ENCODE measurements at regions of chrX and their contacts with region 1.

Region 1: DNA sequence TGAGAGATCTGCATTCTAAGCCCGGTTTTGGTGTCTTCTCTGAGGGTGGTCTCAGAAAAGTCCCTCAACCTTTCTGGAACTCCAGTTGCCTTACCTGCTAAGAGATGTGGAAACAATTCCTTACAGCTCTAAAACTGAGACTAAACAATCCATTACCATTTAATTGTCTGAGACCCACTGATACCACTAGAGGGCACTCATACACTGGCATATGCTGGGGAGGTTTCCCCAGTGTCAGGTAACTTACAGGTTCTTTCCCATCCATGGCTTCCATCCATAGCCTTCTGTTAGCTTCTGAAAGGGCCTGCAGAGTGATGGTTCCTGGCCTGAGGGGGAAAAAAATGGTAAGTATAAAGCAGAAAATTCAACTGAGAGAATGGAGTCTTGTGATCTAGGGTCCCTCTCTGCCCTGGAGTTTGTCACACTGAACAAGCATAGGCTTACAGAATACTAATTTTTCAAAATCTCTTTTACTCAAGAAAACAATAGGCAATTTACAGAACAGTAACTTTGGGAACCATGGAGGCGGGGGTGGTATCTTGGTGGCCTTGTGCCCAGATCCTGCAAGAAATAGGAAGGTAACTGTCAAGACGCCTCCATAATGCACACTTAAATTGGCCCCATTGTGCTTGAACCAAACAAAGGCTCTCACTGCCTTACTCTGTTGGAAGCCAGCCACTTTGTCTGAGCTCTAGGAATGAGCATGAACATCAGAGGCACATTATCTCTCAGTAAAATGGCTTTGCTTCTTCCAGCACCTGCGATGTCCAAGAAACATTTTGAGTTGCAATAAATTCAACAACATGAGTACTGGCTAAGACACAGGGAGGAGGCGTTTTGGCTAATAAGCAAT is 236.1 kb downstream of the OPHN1 start:
- DNase-seq: no peak

Region 2: GRCh38 chrX:67665583-67665982 is 531.6 kb before region 1 on chrX:
- intact Hi-C with region 1: no loop called
- DNase-seq: no peak

Region 3: DNA sequence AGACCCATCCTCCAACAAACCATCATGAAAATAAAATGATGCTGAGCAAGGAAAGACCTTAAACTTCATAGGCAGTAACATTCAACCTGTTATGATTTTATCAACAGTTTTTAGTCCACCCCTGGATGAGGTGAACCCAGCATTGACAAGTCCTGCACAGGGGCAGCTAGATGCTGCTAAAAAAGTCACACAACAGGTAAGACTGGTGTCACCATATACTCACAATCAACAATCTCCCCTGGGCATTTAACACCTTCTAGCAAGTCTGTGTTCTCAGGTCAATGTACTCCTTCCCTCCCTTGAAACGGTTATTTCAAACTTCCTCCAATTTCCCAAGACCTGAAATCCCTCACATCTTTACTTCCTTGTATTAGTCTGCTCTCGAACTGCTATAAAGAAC is 45.7 kb before region 1 on chrX:
- intact Hi-C with region 1: no loop called
- DNase-seq: no peak

Region 4: DNA sequence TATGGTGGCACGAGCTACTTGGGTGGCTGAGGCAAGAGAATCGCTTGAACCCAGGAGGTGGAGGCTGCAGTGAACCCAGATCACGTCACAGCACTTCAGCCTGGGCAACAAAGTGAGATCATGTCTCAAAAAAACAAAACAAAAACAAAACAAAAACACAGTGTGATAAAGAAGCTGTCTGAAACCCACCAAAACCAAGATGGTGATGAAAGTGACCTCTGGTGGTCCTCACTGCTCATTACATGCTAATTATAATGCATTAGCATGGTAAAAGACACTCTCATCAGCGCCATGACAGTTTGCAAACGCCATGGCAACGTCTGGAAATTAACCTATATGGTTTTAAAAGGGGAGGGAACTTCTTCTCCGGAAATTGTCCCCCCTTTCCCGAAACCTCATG is 265.5 kb after region 1 on chrX:
- intact Hi-C with region 1: loop called (anchors 5 kb)
- DNase-seq: no peak

Region 5: GRCh38 chrX:68699960-68700746 is 503.0 kb after region 1 on chrX:
- intact Hi-C with region 1: loop called (anchors 10 kb)
- DNase-seq: no peak

Measured in cardiac septum (tissue), 1 donor.